ENCODE measurements at regions of chr9 and their contacts with region 1.

Region 1: GRCh38 chr9:19161257-19162025 is 34.1 kb upstream of the PLIN2 start:
- DNase-seq: peak; percentile 82
- H3K4me3 ChIP-seq: no peak overlapping the region
- H3K27ac ChIP-seq: no peak overlapping the region
- H3K4me1 ChIP-seq: peaks cover 11% of the 10 kb centered on the region
- H3K27me3 ChIP-seq: no peaks in the 10 kb centered on the region
- CTCF ChIP-seq: no peak
- POLR2A ChIP-seq: no peak

Region 2: DNA sequence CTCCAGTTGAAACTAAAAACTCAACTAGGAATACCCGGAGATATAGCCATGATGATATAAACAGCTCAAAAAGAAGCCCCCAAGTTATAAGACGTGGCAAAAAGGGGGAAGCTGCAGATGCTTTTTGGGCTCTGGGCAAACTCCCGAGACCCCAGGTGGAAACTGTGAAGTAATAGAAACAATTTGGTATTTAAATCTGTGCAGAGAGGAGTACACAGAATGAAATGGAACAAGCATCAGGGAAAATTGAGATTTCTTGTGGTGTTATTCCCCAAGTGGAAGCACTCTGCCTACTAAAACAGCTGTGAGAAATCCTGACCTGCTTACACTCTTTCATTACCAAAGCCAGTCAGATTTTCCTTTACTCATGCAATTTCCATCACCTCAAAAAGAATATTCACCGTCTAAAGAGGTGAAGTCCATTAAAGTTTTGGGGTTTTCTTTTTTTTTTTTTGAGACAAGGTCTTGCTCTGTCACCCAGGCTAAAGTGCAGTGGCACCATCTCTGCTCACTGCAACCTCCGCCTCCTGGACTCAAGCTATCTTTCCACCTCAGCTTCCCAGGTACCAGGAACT is 152.0 kb before region 1 on chr9:
- CTCF ChIA-PET with region 1: no interaction called
- POLR2A ChIA-PET with region 1: no interaction called
- dilution Hi-C with region 1: no loop called
- intact Hi-C with region 1: no loop called
- DNase-seq: no peak
- H3K4me3 ChIP-seq: no peak overlapping the region
- H3K27ac ChIP-seq: no peak overlapping the region
- H3K4me1 ChIP-seq: no peaks in the 10 kb centered on the region
- H3K27me3 ChIP-seq: peaks cover 0 to 1% of the 10 kb centered on the region in 2 experiments
- CTCF ChIP-seq: no peak
- POLR2A ChIP-seq: no peak

Region 3: GRCh38 chr9:19127881-19128500 is 33.5 kb before region 1 on chr9:
- CTCF ChIA-PET with region 1: no interaction called
- POLR2A ChIA-PET with region 1: no interaction called
- dilution Hi-C with region 1: no loop called
- intact Hi-C with region 1: loop called (anchors 1 kb)
- DNase-seq: peak; percentile 59
- H3K4me3 ChIP-seq: peak overlapping the region; percentile 43 to 87 (median 75)
- H3K27ac ChIP-seq: peak overlapping the region; percentile 76
- H3K4me1 ChIP-seq: peaks cover 29% of the 10 kb centered on the region
- H3K27me3 ChIP-seq: no peaks in the 10 kb centered on the region
- CTCF ChIP-seq: no peak
- POLR2A ChIP-seq: no peak

Region 4: GRCh38 chr9:19230356-19231125 is 69.1 kb after region 1 on chr9 and contains the start of gene DENND4C:
- CTCF ChIA-PET with region 1: no interaction called
- POLR2A ChIA-PET with region 1: no interaction called
- dilution Hi-C with region 1: no loop called
- intact Hi-C with region 1: no loop called
- DNase-seq: peak; percentile 90
- H3K4me3 ChIP-seq: peak within 1 kb of the TSS; percentile 65 to 99 (median 97)
- H3K27ac ChIP-seq: peak within 1 kb of the TSS; percentile 86
- H3K4me1 ChIP-seq: peaks cover 19% of the 10 kb centered on the region
- H3K27me3 ChIP-seq: no peaks in the 10 kb centered on the region
- CTCF ChIP-seq: no peak
- POLR2A ChIP-seq: peak; percentile 87
- total RNA-seq, gene DENND4C: 36.5 and 36.8 TPM in 2 replicates

Measured in endothelial cell of umbilical vein (primary cell).